Heart left ventricle (tissue), 16 donors: ENCODE measurements at regions of chr19 and their contacts with region 1.

Region 1: DNA sequence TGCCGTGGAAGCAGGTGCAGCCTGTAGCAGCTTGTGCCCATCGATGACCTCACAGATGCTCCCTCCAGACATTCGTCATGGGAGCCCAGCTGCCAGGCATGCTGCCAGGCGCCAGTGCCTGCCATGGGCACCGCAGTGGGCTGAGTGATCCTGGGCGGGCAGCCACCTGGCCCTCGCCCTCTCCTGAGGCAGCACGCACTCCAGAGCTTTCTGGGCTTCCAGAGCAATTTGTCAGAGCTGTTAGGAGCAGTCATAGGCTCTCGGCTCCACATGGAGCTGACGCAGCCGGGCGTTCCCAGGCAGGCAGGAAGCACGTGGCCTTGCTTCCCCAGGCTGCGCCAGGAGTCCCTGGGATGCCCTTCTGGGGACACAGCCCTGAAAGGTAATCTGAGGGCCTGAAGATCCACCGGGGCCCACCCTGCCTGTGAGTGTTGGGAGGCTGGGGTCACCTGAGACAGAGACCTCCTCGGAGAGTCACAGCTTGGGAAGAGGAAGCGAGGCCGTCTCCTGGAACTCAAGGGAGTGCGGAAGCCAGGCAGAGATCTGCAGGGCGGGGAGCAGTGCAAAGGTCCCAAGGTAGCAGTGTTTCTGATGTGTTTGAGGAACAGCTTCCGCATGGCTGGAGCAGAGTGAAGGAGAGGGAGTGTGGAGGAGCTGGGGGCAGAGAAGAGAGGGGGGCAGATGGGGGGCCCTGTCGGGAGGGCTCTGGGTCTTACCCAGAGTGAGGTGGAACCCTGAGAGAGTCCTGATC is 50.6 kb downstream of the DPF1 start:
- DNase-seq: peak; percentile 83 to 94 (median 87)
- ATAC-seq: peak; percentile 97 to 99 (median 98)
- H3K4me3 ChIP-seq: peak overlapping the region in 3 of 12 donors; percentile 11 to 40 (median 16)
- H3K27ac ChIP-seq: peak overlapping the region in 11 of 12 donors; percentile 62 to 93 (median 74)
- H3K4me1 ChIP-seq: peaks cover 0 to 15% (median 2%) of the 10 kb centered on the region in 12 donors
- H3K27me3 ChIP-seq: no peaks in the 10 kb centered on the region
- CTCF ChIP-seq: no peak
- POLR2A ChIP-seq: peak in 1 of 2 donors; percentile 18

Region 2: DNA sequence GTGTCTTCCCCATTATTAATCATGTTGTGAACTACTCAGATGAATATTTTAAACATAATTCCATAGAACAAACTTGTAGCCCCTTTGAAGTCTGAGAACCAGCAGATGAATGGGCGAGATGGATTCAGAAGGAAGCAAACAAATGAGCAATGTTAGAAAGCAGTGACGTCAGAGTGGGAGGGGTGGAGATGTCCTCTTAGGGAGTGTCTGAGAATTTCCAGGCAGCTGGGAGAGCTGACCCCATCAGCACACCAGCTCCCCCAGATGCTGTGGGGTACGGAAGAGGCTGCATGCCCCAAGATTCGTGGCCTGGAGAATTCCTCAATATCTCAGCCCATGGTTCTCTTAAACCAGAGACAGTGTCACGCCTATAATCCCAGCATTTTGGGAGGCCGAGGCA is 18.0 kb before region 1 on chr19:
- intact Hi-C with region 1: loop called in 1 of 10 experiments (anchors 2 kb)
- DNase-seq: no peak
- ATAC-seq: no peak
- H3K4me3 ChIP-seq: no peak overlapping the region
- H3K27ac ChIP-seq: no peak overlapping the region
- H3K4me1 ChIP-seq: peaks cover 0 to 5% (median 0%) of the 10 kb centered on the region in 12 donors
- H3K27me3 ChIP-seq: no peaks in the 10 kb centered on the region
- CTCF ChIP-seq: no peak
- POLR2A ChIP-seq: no peak